Right cardiac atrium (tissue), 5 donors: ENCODE measurements at regions of chr12 and their contacts with region 1.

Region 1: GRCh38 chr12:12081836-12082497 is 11.2 kb downstream of the BCL2L14 start:
- DNase-seq: no peak
- ATAC-seq: peak; percentile 83 to 85
- H3K4me3 ChIP-seq: no peak overlapping the region
- H3K27ac ChIP-seq: peak overlapping the region; percentile 95
- H3K4me1 ChIP-seq: no peaks in the 10 kb centered on the region
- H3K27me3 ChIP-seq: no peaks in the 10 kb centered on the region

Region 2: DNA sequence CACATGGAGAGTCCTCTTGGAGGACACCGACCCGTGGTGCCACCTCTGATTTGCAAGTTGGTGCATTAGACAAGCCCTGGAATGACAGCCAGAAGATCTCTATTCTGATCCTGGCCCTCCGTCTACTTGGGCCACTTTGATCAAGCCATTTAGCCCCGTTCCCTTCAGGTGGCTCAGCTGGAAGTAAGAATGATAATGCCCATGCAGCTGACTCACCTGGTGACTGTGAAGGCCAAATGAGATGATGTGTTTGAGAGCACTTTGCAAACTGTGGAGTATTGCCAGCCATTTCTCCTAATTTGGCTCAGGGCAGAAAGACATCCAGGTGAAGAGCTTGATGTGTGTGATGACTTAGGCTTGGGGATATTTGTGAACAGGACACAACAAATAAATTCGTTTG is 266.6 kb before region 1 on chr12:
- intact Hi-C with region 1: loop called in 1 of 4 experiments (anchors 5 kb)
- DNase-seq: no peak
- ATAC-seq: no peak
- H3K4me3 ChIP-seq: no peak overlapping the region
- H3K27ac ChIP-seq: no peak overlapping the region
- H3K4me1 ChIP-seq: peaks cover 7% of the 10 kb centered on the region
- H3K27me3 ChIP-seq: no peaks in the 10 kb centered on the region

Region 3: DNA sequence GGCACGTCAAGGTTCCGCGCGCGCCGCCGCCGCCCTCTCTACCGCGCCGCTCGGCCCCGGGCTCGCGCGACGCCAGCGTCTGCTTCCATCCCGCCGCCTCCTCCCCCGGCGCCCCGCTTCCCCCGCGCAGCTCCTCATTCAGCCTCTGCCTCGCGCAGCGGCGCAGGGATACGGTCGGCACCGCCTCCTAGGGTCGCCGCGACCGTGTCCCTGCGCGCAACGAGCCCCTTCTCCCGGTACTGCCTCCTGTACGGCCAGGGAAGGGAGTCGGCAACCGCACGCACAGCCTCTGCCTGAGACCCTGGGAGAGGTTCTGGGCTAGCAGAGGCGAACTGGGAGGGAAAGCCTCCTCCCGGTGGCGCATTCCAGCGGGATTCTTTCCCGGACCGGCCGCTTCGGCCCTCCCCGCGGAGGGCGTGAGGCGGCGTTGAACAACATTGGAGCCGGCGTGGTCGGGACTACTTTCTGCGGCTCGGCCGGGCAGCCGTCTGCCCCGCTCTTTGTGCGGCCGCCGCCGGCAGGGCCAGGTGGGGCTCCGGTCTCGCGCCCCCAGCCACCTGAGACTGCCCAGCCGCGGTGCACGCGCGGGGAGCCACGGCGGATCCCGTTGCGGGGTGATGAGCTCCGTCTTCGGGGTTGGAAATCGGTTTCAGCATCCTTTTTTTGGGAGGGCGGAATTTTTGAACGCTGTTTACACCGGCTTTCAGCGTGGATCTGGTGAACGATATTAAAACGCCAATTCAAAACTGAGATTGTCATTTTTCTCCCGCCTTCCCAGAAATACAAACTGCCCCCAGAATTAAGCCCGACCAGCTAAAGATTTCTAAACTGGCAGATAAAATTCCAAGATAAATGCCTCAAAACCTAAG is 185.1 kb after region 1 on chr12 and contains the start of gene LRP6:
- intact Hi-C with region 1: loop called in 1 of 4 experiments (anchors 5 kb)
- DNase-seq: peak; percentile 94 to 97 (median 96)
- ATAC-seq: peak; percentile 99
- H3K4me3 ChIP-seq: peak within 1 kb of the TSS; percentile 62
- H3K27ac ChIP-seq: peak within 1 kb of the TSS; percentile 89
- H3K4me1 ChIP-seq: no peaks in the 10 kb centered on the region
- H3K27me3 ChIP-seq: no peaks in the 10 kb centered on the region
- total RNA-seq, gene LRP6: 18.3 to 23.9 (median 21.1) TPM

Region 4: DNA sequence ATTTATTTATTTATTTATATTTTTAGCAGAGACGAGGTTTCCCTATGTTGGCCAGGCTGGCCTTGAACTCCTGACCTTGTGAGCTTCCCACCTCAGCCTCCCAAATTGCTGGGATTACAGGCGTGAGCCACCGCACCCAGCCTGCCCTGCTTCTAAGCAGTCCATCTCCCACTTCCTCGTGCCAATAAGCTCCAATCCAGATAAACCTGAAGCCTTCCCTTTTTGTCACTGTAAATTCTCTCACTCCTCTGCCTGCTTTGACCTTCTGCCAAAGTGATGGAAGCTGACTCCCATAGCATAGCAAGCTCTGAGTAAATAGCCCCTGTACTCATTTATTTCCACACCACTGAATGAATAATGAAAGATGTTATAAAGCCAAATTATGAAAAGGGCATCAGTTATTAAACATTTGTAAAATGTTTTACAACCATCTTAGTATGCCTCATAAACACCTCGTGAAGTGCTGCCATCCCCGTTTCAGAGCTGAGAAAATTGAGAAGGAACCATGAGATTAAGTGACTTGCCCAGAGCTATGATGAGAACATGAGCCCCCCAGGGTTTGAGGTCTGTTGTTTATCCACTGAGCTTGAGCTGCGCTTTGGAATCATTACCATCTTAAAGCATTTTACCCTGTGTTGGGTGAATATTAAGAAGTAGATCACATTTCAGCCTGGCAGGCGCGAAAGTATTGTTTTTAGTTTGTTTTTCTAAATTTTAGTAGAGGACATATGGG is 237.7 kb after region 1 on chr12:
- intact Hi-C with region 1: loop called in 1 of 4 experiments (anchors 5 kb)
- DNase-seq: no peak
- ATAC-seq: peak in 1 of 2 donors; percentile 59
- H3K4me3 ChIP-seq: peak overlapping the region; percentile 44
- H3K27ac ChIP-seq: peak overlapping the region; percentile 50
- H3K4me1 ChIP-seq: no peaks in the 10 kb centered on the region
- H3K27me3 ChIP-seq: no peaks in the 10 kb centered on the region

Region 5: GRCh38 chr12:12327802-12328201 is 245.8 kb after region 1 on chr12:
- intact Hi-C with region 1: loop called in 3 of 4 experiments (anchors 2 to 5 kb)
- DNase-seq: no peak
- ATAC-seq: peak; percentile 64 to 67
- H3K4me3 ChIP-seq: no peak overlapping the region
- H3K27ac ChIP-seq: no peak overlapping the region
- H3K4me1 ChIP-seq: no peaks in the 10 kb centered on the region
- H3K27me3 ChIP-seq: no peaks in the 10 kb centered on the region

Region 6: DNA sequence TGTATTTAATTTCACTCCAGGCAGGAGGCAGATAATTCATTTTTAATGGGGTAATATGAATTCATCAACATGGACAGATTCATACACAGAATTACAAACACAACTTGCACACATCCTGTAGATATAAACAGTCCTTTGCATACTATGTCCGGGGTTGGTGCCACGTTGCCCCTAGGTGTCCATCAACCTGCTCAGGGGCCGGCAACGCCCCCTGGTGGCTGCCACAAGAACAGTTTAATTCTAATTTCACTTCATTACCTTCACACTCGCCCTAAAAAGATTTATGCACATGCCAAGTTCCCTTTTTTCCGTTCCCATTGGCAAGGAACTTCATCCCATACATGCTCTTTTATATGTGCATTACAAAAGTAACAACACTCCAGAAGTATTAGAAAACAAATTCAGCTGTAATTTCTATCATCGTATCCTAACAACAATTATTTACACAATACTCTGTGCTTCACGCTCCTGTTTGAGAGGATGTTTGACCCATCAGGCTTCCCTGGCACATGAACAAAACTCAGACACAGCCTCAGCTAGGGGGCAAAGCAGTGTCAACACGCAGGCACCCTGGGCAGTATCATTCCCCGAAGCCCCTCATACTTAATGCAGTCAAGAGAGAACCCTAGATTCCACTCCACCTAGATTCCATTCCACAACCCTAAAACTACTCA is 252.5 kb after region 1 on chr12:
- intact Hi-C with region 1: loop called in 1 of 4 experiments (anchors 5 kb)
- DNase-seq: peak; percentile 53 to 76 (median 70)
- ATAC-seq: peak; percentile 41 to 44
- H3K4me3 ChIP-seq: no peak overlapping the region
- H3K27ac ChIP-seq: no peak overlapping the region
- H3K4me1 ChIP-seq: peaks cover 4% of the 10 kb centered on the region
- H3K27me3 ChIP-seq: no peaks in the 10 kb centered on the region